ENCODE measurements at regions of chr11 and their contacts with region 1.

Region 1: GRCh38 chr11:80155412-80156017 is 714.7 kb upstream of the TENM4 start:
- DNase-seq: peak; percentile 17
- H3K4me3 ChIP-seq: no peak overlapping the region
- H3K27ac ChIP-seq: no peak overlapping the region
- H3K4me1 ChIP-seq: no peaks in the 10 kb centered on the region
- H3K27me3 ChIP-seq: peaks cover 2% of the 10 kb centered on the region
- CTCF ChIP-seq: peak; percentile 63 to 74

Region 2: GRCh38 chr11:79762279-79762921 is 393.1 kb before region 1 on chr11:
- CTCF ChIA-PET with region 1: no interaction called
- dilution Hi-C with region 1: no loop called
- in situ Hi-C with region 1: no loop called
- intact Hi-C with region 1: loop called (anchors 1 kb)
- DNase-seq: no peak
- H3K4me3 ChIP-seq: no peak overlapping the region
- H3K27ac ChIP-seq: no peak overlapping the region
- H3K4me1 ChIP-seq: no peaks in the 10 kb centered on the region
- H3K27me3 ChIP-seq: no peaks in the 10 kb centered on the region
- CTCF ChIP-seq: peak in 1 of 2 donors; percentile 34

Region 3: DNA sequence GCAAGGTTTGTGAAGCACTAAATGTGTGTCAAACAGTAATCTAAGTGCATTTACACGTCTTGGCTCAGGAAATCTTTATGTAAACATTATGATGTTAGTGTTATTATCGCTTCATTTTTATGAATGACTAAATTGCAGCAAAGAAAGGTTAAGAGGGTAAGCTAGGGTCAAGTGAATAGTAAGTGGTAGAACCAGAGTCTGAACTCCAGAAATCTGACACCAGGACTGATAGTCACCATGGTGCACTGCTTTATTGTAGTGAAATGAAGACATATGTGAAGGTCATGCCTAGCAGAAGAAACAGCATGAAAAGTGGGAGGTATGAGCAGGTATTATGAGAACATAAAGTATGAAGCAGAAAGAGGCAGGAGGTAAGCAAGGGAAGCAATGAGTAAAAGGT is 346.0 kb before region 1 on chr11:
- CTCF ChIA-PET with region 1: no interaction called
- dilution Hi-C with region 1: no loop called
- in situ Hi-C with region 1: no loop called
- intact Hi-C with region 1: no loop called
- DNase-seq: no peak
- H3K4me3 ChIP-seq: no peak overlapping the region
- H3K27ac ChIP-seq: no peak overlapping the region
- H3K4me1 ChIP-seq: no peaks in the 10 kb centered on the region
- H3K27me3 ChIP-seq: no peaks in the 10 kb centered on the region
- CTCF ChIP-seq: no peak

Region 4: DNA sequence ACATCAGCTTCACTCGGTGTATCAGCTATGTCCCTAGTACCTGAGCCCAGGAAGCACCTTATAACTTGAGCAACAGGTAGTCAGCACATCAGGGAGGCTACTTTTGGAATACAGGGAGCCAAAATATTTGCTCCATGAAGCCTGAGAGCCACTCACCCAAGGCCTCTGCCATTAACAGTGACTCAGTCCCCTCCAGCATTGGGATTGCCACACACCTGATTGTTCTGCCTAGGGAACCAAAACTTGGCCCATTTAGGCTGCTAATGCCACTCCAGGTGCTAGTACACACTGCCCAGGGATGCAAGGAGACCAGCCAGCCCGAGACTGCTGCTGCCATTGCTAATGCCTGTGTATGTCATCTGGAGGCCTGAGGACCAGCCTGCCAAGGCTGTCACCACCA is 58.9 kb after region 1 on chr11:
- CTCF ChIA-PET with region 1: no interaction called
- dilution Hi-C with region 1: no loop called
- in situ Hi-C with region 1: no loop called
- intact Hi-C with region 1: no loop called
- DNase-seq: peak; percentile 6
- H3K4me3 ChIP-seq: no peak overlapping the region
- H3K27ac ChIP-seq: no peak overlapping the region
- H3K4me1 ChIP-seq: no peaks in the 10 kb centered on the region
- H3K27me3 ChIP-seq: no peaks in the 10 kb centered on the region
- CTCF ChIP-seq: no peak

Measured in mammary epithelial cell (primary cell).